GM10248 (cell line): ENCODE measurements at regions of chr3 and their contacts with region 1.

Region 1: DNA sequence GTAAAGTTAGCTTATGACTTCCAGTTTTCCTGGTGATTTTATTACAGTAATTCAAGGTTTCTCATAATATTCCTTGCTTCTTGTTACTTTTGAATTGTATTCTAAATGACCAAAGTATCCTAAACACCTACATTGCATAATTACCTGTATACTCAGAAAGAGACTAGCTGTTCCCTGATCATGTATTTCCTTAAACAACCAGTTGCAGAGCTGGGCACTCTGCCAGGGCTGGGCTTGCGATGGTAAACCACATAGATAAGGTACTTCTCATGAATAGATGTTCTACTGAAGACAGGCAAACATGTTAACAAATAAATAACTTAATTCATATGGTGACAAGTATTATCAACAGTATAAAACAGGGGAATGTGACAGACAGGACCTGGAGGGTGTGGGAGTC is 142.3 kb upstream of the WNT5A start:
- DNase-seq: no peak
- CTCF ChIP-seq: no peak

Region 2: DNA sequence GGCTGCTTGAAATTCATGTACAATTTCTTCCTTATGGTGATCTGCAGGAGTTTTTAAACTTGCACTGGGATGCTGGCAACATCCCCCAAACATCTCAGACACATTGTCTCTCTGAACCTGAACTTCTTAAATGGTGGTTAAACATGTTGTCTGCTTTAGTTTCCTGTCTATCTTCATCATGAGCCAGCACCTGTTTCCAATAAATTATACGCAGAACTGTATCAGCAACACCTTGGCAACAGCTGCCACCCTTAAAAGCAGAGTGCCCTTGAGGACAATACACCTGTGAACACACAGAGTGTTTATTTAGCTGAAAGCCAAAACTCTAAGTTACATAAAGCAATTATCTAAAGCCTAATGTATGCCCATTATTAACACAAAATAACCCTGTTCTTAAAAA is 385.2 kb before region 1 on chr3:
- CTCF ChIA-PET with region 1: no interaction called
- POLR2A ChIA-PET with region 1: no interaction called
- DNase-seq: no peak
- CTCF ChIP-seq: no peak

Region 3: DNA sequence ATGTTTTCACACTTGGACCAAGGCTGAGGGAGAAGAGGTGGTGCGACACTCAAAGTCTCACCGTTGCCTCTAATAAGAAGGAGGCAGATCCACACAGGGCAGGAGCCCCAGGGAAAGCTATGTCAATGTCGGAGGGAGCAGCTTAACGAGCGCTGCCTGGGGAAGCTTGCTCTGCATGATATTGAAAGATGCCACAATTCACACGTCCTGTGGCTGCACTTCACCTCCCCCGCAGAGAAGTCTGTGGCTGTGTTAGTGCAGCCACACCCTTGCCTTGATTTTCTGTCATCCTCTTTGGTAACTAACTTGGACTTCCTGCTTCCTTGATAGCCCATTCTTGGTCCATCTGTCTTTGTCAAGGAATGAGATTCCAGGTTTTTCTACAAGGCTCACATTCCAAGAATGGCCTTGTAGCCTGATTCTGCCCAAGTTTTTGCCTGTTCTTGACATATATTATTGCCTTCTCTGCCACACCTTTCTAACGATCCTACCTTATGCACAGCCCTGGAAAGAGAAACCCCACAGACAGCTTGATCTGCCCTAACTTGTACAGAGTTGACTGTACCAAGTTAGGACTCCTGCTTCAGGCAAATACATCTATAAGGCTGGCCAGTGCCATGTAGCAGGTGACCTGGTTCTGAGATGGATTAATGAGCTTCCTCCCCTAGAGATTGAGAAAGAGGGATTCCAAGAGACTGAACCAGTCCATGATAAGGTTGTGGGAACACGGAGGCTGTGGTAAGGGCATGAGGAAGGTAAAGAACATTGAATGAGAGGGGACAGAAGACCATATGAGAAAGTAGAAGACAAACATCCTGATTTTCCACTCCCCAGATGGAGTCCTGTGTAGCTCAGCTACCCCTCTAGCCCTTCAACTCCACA is 10.7 kb after region 1 on chr3:
- CTCF ChIA-PET with region 1: interaction called, 11 read pairs
- POLR2A ChIA-PET with region 1: no interaction called
- DNase-seq: no peak
- CTCF ChIP-seq: no peak

Region 4: DNA sequence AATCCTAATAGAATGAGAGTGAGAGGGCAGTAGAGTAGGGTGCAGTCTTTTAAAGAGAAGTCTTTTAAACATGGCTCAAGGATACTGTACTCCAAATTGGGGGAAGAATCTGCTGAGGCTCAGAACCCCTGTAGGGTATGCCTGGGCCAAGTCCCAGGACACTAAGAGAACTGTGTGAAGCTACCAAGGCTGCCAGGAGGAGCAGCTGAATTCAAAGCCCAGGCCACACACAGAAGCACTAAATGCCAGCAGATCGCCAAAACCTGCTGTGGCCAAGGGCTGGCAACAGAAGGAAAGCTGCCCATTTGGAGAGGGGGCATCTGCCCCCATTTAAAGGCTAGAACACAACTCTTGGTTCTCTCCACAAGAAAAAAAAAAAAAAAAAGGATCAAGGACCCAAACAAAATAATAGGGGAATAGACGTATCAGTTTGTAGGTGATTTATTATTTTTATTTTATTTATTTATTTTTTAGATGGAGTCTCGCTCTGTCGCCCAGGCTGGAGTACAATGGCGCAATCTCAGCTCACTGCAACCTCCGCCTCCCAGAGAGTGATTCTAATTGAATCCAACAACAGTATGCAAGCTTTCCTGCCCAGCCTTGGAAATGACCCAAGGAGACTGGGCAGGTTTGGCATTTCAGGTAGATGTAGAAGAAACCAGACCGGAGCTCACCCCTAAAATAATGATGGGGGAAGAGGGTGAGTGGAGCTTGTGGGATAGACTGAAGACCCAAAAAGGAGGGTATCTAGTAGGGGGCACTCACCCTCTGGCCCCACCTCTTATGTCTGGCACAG is 136.7 kb after region 1 on chr3:
- CTCF ChIA-PET with region 1: no interaction called
- POLR2A ChIA-PET with region 1: no interaction called
- DNase-seq: no peak
- CTCF ChIP-seq: no peak